Naive thymus-derived CD4-positive, alpha-beta T cell (primary cell): ENCODE measurements at regions of chr2 and their contacts with region 1.

Region 1: DNA sequence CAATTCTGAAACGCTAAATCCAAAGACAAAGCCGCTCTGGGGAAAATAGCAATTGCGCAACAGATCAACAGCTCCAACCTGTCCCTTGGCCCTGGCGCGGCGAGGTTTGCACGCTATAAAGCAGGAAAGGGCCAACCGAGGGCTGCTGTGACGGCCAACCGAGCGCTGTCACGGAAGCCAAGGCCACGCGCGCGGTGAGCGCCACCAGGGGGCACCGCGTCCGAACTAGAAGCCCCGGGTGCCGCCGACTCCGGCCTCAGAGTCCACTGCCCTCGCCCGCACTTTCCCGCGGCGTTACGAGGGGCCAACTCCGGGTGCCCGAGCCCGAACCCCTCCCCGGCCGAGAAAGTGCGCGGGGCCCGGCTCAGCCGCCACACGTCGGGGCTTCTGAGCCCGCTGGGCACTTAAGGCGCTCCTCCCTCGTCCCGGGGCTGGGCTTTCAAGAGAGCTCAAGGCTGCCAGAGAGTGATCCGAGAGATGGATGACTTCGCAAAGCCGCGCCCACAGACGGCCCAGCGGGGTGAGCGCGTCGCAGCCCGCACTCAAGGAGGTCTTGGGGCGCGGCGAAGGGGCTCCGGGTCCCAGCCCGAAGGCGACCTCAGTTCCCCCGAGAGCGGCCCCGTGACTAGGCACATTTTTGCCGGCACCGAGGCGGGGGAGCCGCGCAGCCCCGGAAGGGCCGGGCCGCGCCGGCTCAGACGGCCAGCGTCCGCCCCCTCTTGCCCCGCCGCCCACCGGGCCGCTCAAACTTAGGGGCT is 897 bp downstream of the NFE2L2 start:
- DNase-seq: peak; percentile 91 to 98 (median 95)
- ATAC-seq: peak; percentile 76
- H3K4me3 ChIP-seq: peak overlapping the region; percentile 80
- H3K4me3 Mint-ChIP-seq: peak overlapping the region; percentile 90 to 100 (median 95)
- H3K27ac ChIP-seq: peak overlapping the region; percentile 98
- H3K27ac Mint-ChIP-seq: peak overlapping the region; percentile 86 to 98 (median 96)
- H3K4me1 ChIP-seq: peaks cover 27 to 28% of the 10 kb centered on the region in 2 donors
- H3K4me1 Mint-ChIP-seq: peaks cover 28 to 62% (median 56%) of the 10 kb centered on the region in 7 donors
- H3K27me3 ChIP-seq: no peaks in the 10 kb centered on the region
- H3K27me3 Mint-ChIP-seq: no peaks in the 10 kb centered on the region

Region 2: DNA sequence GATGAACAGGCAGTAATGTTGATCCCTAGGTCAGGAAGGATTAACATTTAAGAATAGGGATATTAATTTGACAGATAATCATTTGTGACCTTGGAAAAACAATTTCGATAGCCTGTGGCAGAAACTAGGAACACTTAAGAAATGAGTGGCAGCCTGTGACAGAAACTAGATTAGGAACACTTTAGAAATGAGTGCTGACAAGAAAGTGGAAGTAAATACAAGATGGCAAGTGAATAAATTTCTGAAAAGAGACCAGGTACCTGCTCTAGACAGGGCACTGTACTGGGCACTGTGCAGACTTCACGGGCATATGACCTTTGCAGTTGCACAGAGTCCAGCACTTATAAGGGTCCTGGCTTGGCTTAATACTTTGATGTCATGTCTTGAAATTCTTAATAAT is 56.5 kb before region 1 on chr2:
- CTCF ChIA-PET with region 1: interaction called, 14 read pairs
- POLR2A ChIA-PET with region 1: interaction called, 76 read pairs
- intact Hi-C with region 1: loop called (anchors 1 kb)
- DNase-seq: no peak
- ATAC-seq: no peak
- H3K4me3 ChIP-seq: no peak overlapping the region
- H3K4me3 Mint-ChIP-seq: no peak overlapping the region
- H3K27ac ChIP-seq: no peak overlapping the region
- H3K27ac Mint-ChIP-seq: peak overlapping the region in 5 of 9 donors; percentile 47 to 56 (median 53)
- H3K4me1 ChIP-seq: peaks cover 14 to 16% of the 10 kb centered on the region in 2 donors
- H3K4me1 Mint-ChIP-seq: peaks cover 5 to 23% (median 15%) of the 10 kb centered on the region in 7 donors
- H3K27me3 ChIP-seq: no peaks in the 10 kb centered on the region
- H3K27me3 Mint-ChIP-seq: peaks cover 0 to under 1% (median 0%) of the 10 kb centered on the region in 5 donors

Region 3: GRCh38 chr2:177239932-177240630 is 23.5 kb before region 1 on chr2:
- CTCF ChIA-PET with region 1: interaction called, 14 read pairs
- POLR2A ChIA-PET with region 1: interaction called, 141 read pairs
- intact Hi-C with region 1: no loop called
- DNase-seq: peak in 2 of 9 donors; percentile 28 to 40
- ATAC-seq: peak; percentile 91
- H3K4me3 ChIP-seq: no peak overlapping the region
- H3K4me3 Mint-ChIP-seq: peak overlapping the region; percentile 46 to 84 (median 67)
- H3K27ac ChIP-seq: peak overlapping the region; percentile 64
- H3K27ac Mint-ChIP-seq: peak overlapping the region; percentile 78 to 90 (median 86)
- H3K4me1 ChIP-seq: peaks cover 38 to 52% of the 10 kb centered on the region in 2 donors
- H3K4me1 Mint-ChIP-seq: peaks cover 60 to 91% (median 79%) of the 10 kb centered on the region in 7 donors
- H3K27me3 ChIP-seq: no peaks in the 10 kb centered on the region
- H3K27me3 Mint-ChIP-seq: no peaks in the 10 kb centered on the region

Region 4: DNA sequence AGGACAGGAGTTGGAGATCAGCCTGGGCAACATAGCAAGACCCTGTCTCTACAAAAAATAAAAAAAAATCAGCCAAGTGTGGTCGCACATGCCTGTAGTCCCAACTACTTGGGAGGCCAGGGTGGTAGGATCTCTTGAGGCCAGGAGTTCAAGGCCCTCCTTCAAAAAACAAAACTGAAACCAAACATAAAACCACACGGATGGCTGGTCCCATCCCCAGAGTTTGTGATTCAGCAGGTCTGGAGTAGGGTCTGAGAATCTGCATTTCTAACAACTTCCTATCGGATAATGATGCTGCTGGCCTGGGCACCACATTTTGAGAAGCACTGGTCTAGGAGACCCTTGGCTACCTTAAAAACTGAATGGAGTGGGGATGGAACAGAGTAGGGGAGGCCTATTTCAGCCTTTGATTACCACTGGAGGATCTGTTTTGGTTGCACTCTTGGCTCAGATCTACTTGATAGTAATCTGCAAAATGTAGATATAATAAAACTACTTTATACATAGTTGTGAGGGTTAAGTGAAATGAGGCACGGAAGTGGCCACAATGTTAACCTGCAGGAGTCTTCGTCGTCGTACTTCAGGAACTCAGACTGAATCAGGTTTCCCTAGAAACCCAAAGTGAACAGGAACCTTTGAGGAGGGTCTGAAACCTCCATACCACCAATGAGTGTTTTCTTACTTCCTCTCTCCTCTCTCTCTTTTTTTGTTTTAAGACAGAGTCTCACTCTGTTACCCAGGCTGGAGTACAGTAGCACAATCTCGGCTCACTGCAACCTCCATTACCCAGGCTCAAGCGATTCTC is 26.4 kb after region 1 on chr2:
- CTCF ChIA-PET with region 1: interaction called, 77 read pairs
- POLR2A ChIA-PET with region 1: interaction called, 144 read pairs
- intact Hi-C with region 1: loop called (anchors 1 kb)
- DNase-seq: peak in 4 of 9 donors; percentile 23 to 30 (median 28)
- ATAC-seq: peak; percentile 46
- H3K4me3 ChIP-seq: peak overlapping the region; percentile 39
- H3K4me3 Mint-ChIP-seq: peak overlapping the region; percentile 49 to 86 (median 74)
- H3K27ac ChIP-seq: peak overlapping the region; percentile 52
- H3K27ac Mint-ChIP-seq: peak overlapping the region; percentile 78 to 97 (median 91)
- H3K4me1 ChIP-seq: peaks cover 4 to 19% of the 10 kb centered on the region in 2 donors
- H3K4me1 Mint-ChIP-seq: peaks cover 7 to 62% (median 33%) of the 10 kb centered on the region in 7 donors
- H3K27me3 ChIP-seq: no peaks in the 10 kb centered on the region
- H3K27me3 Mint-ChIP-seq: no peaks in the 10 kb centered on the region

Region 5: DNA sequence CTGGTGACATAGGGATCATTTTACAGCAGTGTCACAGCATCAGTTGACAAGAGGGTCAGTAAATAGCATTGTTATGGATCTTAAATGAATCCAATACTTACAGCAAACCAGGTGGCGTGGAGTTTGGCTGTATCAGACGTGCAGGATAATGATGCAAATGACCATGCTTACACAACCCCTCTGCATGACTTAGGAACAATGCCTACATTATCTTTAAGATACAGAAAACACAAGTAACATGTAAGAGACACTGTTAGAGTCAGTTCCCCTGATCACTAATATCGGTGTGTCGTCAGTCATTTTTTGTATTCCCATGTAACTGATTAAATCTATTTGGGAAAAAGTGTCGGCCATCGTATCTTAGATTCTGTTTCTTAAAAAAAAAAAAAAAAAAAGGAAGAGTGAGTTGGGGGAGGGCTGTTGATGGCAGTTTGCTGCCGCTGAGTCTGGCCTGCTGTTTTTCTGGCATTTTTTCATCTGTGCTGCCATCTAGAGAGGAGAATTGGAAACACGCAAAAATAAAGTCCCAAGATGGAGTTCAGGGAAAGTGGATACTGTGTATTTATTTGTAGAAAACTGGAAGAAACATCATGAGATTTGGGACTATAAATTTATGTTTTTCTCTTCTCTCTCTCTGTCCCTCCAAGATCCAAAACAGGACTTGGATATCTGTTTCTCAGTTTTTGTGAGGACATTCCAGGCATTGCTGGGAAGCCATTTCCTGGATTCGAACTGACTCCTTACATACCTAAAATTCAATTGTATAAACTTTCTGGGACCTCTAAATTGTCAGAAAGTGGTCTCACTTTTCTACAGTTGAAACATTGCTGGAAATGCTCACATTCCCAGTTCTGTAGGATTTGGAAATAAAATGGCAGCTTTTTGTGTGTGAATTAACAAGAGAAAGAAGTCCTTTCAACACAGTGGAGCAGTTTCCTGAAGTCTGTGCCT is 68.7 kb after region 1 on chr2:
- CTCF ChIA-PET with region 1: interaction called, 16 read pairs
- POLR2A ChIA-PET with region 1: interaction called, 85 read pairs
- intact Hi-C with region 1: loop called (anchors 1 kb)
- DNase-seq: peak in 7 of 9 donors; percentile 37 to 76 (median 72)
- ATAC-seq: peak; percentile 91
- H3K4me3 ChIP-seq: no peak overlapping the region
- H3K4me3 Mint-ChIP-seq: peak overlapping the region in 7 of 10 donors; percentile 3 to 73 (median 38)
- H3K27ac ChIP-seq: no peak overlapping the region
- H3K27ac Mint-ChIP-seq: peak overlapping the region in 8 of 9 donors; percentile 3 to 88 (median 56)
- H3K4me1 ChIP-seq: peaks cover 0 to 18% of the 10 kb centered on the region in 2 donors
- H3K4me1 Mint-ChIP-seq: peaks cover 4 to 33% (median 15%) of the 10 kb centered on the region in 7 donors
- H3K27me3 ChIP-seq: no peaks in the 10 kb centered on the region
- H3K27me3 Mint-ChIP-seq: no peaks in the 10 kb centered on the region

Region 6: DNA sequence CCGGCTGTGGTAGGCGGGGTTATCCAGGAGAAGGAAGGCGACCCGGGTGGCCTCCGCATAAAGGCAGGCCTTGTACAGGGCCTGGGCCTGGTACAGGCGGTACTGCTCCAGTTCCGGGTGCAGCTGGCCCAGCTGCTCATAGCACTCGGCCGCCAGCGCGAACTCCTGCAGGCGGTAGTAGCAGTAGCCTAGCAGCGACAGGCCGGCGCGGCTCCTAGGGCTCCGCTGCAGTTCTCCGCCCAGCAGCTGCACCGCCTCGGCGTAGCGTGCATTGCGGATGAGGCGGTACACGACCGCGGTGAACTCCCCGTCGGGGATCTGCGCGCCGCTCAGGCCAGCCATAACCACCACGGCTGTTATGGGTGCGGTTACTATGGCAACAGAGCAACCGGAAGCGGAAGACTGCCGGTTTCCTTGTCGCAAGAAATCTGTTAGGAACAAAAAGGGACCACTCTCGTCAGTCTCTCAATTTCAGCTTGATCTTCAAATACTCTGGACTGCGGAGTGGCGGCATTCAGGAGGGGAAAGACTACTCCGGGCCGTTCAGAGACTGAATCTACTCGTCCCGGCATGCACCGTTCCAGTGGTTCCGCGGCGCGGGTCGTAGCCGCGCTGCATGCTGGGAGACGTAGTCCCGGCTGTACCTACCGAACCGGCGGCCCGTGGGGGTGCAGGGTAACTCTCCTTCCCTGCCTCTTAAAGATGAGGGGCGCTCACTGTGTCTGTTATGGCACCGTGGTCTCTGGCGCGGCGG is 289.0 kb after region 1 on chr2:
- CTCF ChIA-PET with region 1: interaction called, 3 read pairs
- POLR2A ChIA-PET with region 1: interaction called, 3 read pairs
- intact Hi-C with region 1: loop called (anchors 1 kb)
- DNase-seq: peak; percentile 82 to 96 (median 94)
- ATAC-seq: peak; percentile 94
- H3K4me3 ChIP-seq: peak overlapping the region; percentile 89
- H3K4me3 Mint-ChIP-seq: peak overlapping the region; percentile 87 to 99 (median 94)
- H3K27ac ChIP-seq: peak overlapping the region; percentile 100
- H3K27ac Mint-ChIP-seq: peak overlapping the region; percentile 98 to 100 (median 99)
- H3K4me1 ChIP-seq: no peaks in the 10 kb centered on the region
- H3K4me1 Mint-ChIP-seq: peaks cover 4 to 29% (median 14%) of the 10 kb centered on the region in 7 donors
- H3K27me3 ChIP-seq: no peaks in the 10 kb centered on the region
- H3K27me3 Mint-ChIP-seq: peaks cover 0 to 14% (median 4%) of the 10 kb centered on the region in 5 donors